ENCODE measurements at regions of chr15 and their contacts with region 1.

Region 1: DNA sequence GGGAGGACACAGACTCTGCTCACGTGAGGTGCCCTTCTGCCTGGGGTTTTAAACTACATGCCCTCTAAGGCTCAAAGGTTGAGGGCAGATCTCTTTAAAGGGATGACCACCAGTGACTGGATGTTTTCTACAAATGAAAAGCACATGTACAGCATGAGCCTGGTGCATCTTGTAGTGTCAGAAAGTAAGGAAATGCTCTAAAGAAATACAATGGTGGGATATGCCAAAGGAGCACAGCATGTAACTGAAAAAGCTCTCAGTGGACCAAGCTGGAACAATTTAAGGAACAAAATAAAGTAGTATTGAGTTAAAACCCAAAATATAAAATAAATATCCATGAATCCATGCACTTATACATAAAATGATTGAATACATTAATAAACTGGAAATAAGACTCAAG is 78.3 kb upstream of the SEMA6D start:
- DNase-seq: no peak
- ATAC-seq: no peak
- H3K4me3 ChIP-seq: no peak overlapping the region
- H3K27ac ChIP-seq: no peak overlapping the region
- H3K4me1 ChIP-seq: peaks cover 0 to 7% (median 0%) of the 10 kb centered on the region in 12 donors
- H3K27me3 ChIP-seq: peaks cover 0 to 4% (median 0%) of the 10 kb centered on the region in 9 donors
- CTCF ChIP-seq: no peak
- POLR2A ChIP-seq: no peak

Region 2: DNA sequence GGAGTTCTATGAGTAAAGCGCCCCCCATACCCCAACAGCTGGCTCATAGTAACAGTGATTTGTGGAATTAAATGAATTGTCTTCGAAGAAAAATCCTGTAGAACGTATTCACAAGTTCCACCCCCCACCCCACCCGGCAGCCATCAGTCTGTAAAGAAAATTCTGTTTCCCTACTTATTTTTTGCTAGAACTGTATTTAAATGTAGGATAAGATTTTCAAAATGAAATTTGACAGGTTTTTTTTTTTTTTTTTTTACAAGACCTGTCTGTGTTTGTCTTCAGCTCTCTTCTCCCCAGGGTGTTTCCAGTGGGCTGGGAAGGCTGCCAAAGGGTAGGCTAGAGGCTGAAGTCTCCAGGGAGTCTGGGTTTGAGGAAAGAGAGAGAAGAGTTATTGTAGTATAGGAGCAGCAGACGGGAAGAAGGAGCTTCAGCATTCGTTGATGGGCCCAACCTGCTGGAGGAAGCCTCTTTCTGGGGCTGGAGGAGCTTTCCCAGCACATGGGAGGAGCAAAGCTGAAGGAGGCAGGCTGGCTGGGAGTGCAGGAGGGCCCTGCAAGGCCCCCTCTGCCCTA is 52.3 kb before region 1 on chr15:
- intact Hi-C with region 1: loop called in 1 of 10 experiments (anchors 10 kb)
- DNase-seq: peak; percentile 69 to 80 (median 76)
- ATAC-seq: peak in 3 of 4 donors; percentile 48 to 72 (median 55)
- H3K4me3 ChIP-seq: no peak overlapping the region
- H3K27ac ChIP-seq: peak overlapping the region in 2 of 12 donors; percentile 15 to 48
- H3K4me1 ChIP-seq: peaks cover 0 to 13% (median 0%) of the 10 kb centered on the region in 12 donors
- H3K27me3 ChIP-seq: no peaks in the 10 kb centered on the region
- CTCF ChIP-seq: no peak
- POLR2A ChIP-seq: no peak

Region 3: GRCh38 chr15:47711654-47712053 is 72.6 kb after region 1 on chr15:
- intact Hi-C with region 1: no loop called
- DNase-seq: no peak
- ATAC-seq: no peak
- H3K4me3 ChIP-seq: no peak overlapping the region
- H3K27ac ChIP-seq: no peak overlapping the region
- H3K4me1 ChIP-seq: peaks cover 0 to 12% (median 7%) of the 10 kb centered on the region in 12 donors
- H3K27me3 ChIP-seq: peaks cover 0 to 4% (median 0%) of the 10 kb centered on the region in 9 donors
- CTCF ChIP-seq: peak; percentile 28 to 68 (median 54)
- POLR2A ChIP-seq: no peak

Region 4: GRCh38 chr15:47857014-47857775 is 218.2 kb after region 1 on chr15:
- intact Hi-C with region 1: no loop called
- DNase-seq: no peak
- ATAC-seq: no peak
- H3K4me3 ChIP-seq: no peak overlapping the region
- H3K27ac ChIP-seq: no peak overlapping the region
- H3K4me1 ChIP-seq: no peaks in the 10 kb centered on the region
- H3K27me3 ChIP-seq: no peaks in the 10 kb centered on the region
- CTCF ChIP-seq: no peak
- POLR2A ChIP-seq: no peak